WTC11 (cell line): ENCODE measurements at regions of chr13 and their contacts with region 1.

Region 1: DNA sequence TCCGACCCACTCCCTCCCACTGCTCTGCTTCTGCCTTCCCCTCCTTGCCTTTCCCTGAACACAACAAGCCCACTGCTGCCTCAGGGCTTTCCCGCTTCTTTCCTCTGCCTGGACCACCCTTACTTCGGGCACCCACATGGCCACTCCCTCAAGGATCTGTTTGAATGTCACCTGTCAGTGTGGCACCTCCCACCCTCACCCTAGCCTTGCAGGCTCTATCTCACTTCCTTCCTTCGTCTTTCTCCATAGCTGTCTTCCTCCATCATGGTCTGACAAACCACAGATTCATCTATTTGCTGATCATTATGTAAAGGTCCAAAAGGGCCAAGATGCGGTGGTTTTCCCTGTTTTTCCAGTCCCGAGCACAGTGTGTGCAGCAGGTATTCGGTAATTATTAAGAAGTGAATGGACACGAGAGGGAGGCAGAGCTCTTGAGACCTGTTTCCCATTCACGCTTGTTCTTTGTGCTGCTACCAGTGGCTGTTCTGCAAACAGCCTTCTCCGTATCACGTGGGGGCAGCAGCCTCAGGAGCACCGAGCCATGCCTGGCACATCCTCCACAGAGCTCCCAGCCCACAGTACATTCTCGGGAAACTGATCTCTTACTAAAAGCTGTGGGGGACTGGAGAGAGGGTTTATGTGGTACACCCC is 50.2 kb downstream of the CCDC70 start:
- DNase-seq: no peak
- ATAC-seq: no peak
- H3K4me3 Mint-ChIP-seq: no peak overlapping the region
- H3K27ac Mint-ChIP-seq: no peak overlapping the region
- H3K4me1 Mint-ChIP-seq: peaks cover 13% of the 10 kb centered on the region
- H3K27me3 Mint-ChIP-seq: peaks cover 11% of the 10 kb centered on the region
- CTCF ChIP-seq: no peak

Region 2: GRCh38 chr13:51814825-51815650 is 96.9 kb before region 1 on chr13:
- CTCF ChIA-PET with region 1: interaction called, 10 read pairs
- POLR2A ChIA-PET with region 1: no interaction called
- DNase-seq: peak; percentile 80
- ATAC-seq: peak; percentile 77
- H3K4me3 Mint-ChIP-seq: no peak overlapping the region; the same call in 1 of the 2 replicates
- H3K27ac Mint-ChIP-seq: peak overlapping the region; percentile 57; the same call in 1 of the 2 replicates
- H3K4me1 Mint-ChIP-seq: peaks cover 37% of the 10 kb centered on the region
- H3K27me3 Mint-ChIP-seq: peaks cover under 1% of the 10 kb centered on the region; the same call in 1 of the 2 replicates
- CTCF ChIP-seq: peak; percentile 74

Region 3: DNA sequence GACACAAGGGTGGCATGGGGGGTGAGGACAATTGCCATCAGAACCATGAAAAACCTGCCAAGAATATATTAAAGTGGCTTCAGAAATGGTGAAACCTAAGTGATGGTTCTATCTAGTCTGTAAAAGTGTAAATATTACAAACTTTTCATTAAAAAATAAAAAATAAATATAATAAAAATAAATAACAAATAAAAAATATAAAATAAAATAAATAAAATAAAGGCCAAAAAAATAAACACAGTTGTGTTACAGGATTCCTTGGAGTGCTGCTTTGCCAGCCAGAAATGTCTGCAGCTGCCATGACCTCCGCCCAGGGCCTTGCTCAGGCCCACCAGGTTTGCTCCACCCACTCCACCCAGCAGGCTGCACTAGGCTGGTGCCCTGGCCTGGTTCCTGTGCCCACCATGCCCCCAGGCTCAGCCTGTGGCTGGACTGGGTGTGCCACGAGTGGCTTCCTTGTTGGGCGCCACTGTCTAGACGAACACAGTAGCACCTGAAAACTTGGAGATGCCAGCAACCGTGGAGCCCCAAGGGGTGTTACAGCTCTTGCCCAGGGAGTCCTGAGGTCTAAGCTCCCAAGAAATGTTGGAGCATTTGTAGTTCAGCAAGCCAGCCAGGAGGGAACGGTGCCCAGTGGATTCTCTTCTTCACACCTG is 29.3 kb before region 1 on chr13:
- CTCF ChIA-PET with region 1: no interaction called
- POLR2A ChIA-PET with region 1: no interaction called
- DNase-seq: no peak
- ATAC-seq: no peak
- H3K4me3 Mint-ChIP-seq: no peak overlapping the region
- H3K27ac Mint-ChIP-seq: no peak overlapping the region
- H3K4me1 Mint-ChIP-seq: no peaks in the 10 kb centered on the region
- H3K27me3 Mint-ChIP-seq: no peaks in the 10 kb centered on the region; the same call in 1 of the 2 replicates
- CTCF ChIP-seq: no peak

Region 4: GRCh38 chr13:51895906-51896888 is 15.8 kb before region 1 on chr13:
- CTCF ChIA-PET with region 1: interaction called, 18 read pairs
- POLR2A ChIA-PET with region 1: no interaction called
- DNase-seq: peak; percentile 69
- ATAC-seq: peak; percentile 95
- H3K4me3 Mint-ChIP-seq: no peak overlapping the region
- H3K27ac Mint-ChIP-seq: no peak overlapping the region
- H3K4me1 Mint-ChIP-seq: peaks cover 11% of the 10 kb centered on the region
- H3K27me3 Mint-ChIP-seq: no peaks in the 10 kb centered on the region
- CTCF ChIP-seq: peak; percentile 27; the same call in 1 of the 2 replicates

Region 5: GRCh38 chr13:51923983-51924539 is 12.1 kb after region 1 on chr13:
- CTCF ChIA-PET with region 1: interaction called, 14 read pairs
- POLR2A ChIA-PET with region 1: no interaction called
- DNase-seq: peak; percentile 46
- ATAC-seq: peak; percentile 92
- H3K4me3 Mint-ChIP-seq: no peak overlapping the region
- H3K27ac Mint-ChIP-seq: no peak overlapping the region
- H3K4me1 Mint-ChIP-seq: no peaks in the 10 kb centered on the region
- H3K27me3 Mint-ChIP-seq: no peaks in the 10 kb centered on the region
- CTCF ChIP-seq: peak; percentile 39; the same call in 1 of the 2 replicates

Region 6: DNA sequence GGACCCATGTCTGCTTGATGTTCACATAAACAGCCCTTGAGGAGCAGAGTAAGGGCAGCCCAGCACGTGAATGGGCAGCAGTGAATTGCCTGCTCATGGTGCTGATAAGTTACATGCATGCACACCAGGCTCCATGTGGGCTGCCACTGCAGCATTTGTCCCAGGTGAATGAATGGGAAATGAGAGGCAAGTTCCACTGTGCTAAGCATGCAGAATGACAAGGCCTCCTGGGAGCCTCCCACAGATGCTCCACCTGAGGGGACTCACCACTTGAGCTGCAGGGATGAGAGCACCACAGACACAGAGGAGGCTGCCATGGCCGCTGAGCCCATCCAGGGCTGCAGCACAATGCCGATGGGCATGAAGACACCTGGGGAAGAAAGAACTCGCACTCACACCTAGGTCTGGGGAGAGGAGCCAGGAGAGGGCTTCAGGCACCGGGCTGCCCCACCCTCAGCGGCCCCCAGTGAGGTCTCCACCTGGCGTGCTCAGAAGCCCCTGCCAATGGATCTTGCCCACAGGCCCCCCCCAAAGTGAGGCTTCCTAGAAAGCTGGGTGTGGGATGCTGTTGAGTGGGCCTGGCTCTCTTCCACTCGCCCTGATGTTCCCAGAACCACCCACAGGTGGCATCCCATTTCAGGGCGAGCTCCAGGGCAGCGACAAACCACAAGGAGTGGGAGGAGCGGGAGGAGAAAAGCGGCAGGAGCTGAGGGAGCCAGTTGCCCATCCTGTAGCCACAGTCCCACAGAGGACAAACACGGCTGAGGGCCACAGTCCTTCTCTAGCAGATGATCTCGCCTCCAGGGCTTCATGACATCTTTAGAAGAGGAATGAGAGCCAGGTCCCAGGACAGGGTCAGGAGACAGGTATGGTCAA is 23.6 kb after region 1 on chr13:
- CTCF ChIA-PET with region 1: interaction called, 13 read pairs
- POLR2A ChIA-PET with region 1: no interaction called
- DNase-seq: peak; percentile 63
- ATAC-seq: peak; percentile 94
- H3K4me3 Mint-ChIP-seq: no peak overlapping the region
- H3K27ac Mint-ChIP-seq: no peak overlapping the region
- H3K4me1 Mint-ChIP-seq: 0 out of 2 replicates have a peak, but pooled peaks cover 3% of the 10 kb centered on the region
- H3K27me3 Mint-ChIP-seq: no peaks in the 10 kb centered on the region
- CTCF ChIP-seq: no peak